SK-N-SH (cell line): ENCODE measurements at regions of chr4 and their contacts with region 1.

Region 1: DNA sequence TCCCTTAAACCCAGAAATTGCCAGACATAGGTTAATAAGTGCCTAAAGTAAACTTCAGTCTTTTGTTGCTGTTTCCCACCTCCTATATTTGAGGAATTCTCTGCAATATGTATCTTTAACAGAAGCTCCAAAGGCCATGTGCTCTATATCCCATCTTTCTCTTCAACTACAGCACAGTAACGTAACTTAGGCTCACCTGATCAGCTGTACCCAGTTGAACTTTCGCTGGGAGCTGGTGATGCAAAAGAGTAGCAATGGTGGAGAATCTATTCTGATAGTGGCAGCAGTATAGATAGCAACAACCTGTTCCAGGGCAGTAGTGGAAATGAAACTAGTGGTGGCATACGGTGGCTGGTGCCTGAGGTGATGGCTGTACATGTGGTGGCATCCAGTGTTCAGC is 33.2 kb upstream of the YTHDC1 start:
- DNase-seq: no peak
- H3K4me3 ChIP-seq: no peak overlapping the region
- H3K27ac ChIP-seq: no peak overlapping the region
- H3K4me1 ChIP-seq: no peaks in the 10 kb centered on the region
- H3K27me3 ChIP-seq: peaks cover 22% of the 10 kb centered on the region
- CTCF ChIP-seq: no peak
- EP300 ChIP-seq: no peak
- RAD21 ChIP-seq: no peak

Region 2: DNA sequence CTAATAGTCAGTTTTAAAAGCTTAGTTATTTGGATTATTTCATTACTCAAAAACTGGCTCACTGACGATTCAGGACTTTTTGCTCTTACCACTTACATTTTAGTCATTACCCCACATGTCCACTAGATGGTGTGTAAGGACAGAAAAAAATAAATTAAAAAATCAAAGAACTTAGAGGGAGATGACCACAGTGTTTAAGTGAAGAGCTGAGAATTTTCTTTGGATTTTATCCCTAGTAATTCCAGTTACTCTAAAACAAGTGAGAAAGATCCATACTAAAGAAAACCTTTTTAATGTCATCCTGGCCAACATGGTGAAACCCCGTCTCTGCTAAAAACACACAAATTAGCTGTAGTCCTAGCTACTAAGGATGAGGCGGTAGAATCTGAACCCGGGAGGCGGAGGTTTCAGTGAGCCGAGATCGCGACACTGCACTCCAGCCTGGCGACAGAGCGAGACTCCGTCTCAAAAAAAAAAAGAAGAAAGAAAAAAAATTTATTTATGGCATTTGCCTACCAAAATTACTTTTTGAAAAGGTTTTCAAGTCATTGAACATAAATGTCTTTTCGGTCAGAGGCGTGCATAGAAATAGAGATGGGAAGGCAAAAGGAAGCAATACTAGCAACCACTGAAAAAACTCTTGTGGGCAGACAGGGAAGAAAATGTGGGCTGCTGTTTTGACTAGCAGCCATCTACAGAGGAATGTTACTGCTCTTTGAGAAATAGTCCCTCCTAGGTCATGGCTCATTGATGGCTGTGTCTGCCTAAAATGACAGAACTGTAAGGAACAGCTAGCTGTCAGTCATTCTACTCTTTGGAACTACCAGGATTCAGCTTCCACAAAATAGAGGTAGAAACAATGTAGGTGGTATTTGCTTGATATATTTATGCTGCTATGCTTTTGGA is 111.0 kb before region 1 on chr4:
- CTCF ChIA-PET with region 1: interaction called, 90 read pairs
- POLR2A ChIA-PET with region 1: interaction called, 3 read pairs
- DNase-seq: peak; percentile 46
- H3K4me3 ChIP-seq: peak overlapping the region in 1 of 2 experiments; percentile 36; a peak in 1 of 4 replicates
- H3K27ac ChIP-seq: no peak overlapping the region
- H3K4me1 ChIP-seq: no peaks in the 10 kb centered on the region
- H3K27me3 ChIP-seq: no peaks in the 10 kb centered on the region; the same call in 1 of the 2 replicates
- CTCF ChIP-seq: peak; percentile 76
- EP300 ChIP-seq: no peak
- RAD21 ChIP-seq: peak; percentile 79

Region 3: GRCh38 chr4:68535974-68536373 is 152.9 kb after region 1 on chr4:
- CTCF ChIA-PET with region 1: no interaction called
- POLR2A ChIA-PET with region 1: no interaction called
- DNase-seq: no peak
- H3K4me3 ChIP-seq: no peak overlapping the region
- H3K27ac ChIP-seq: no peak overlapping the region
- H3K4me1 ChIP-seq: no peaks in the 10 kb centered on the region
- H3K27me3 ChIP-seq: no peaks in the 10 kb centered on the region
- CTCF ChIP-seq: no peak
- EP300 ChIP-seq: no peak
- RAD21 ChIP-seq: no peak